CD8-positive, alpha-beta T cell (primary cell): ENCODE measurements at regions of chr6 and their contacts with region 1.

Region 1: DNA sequence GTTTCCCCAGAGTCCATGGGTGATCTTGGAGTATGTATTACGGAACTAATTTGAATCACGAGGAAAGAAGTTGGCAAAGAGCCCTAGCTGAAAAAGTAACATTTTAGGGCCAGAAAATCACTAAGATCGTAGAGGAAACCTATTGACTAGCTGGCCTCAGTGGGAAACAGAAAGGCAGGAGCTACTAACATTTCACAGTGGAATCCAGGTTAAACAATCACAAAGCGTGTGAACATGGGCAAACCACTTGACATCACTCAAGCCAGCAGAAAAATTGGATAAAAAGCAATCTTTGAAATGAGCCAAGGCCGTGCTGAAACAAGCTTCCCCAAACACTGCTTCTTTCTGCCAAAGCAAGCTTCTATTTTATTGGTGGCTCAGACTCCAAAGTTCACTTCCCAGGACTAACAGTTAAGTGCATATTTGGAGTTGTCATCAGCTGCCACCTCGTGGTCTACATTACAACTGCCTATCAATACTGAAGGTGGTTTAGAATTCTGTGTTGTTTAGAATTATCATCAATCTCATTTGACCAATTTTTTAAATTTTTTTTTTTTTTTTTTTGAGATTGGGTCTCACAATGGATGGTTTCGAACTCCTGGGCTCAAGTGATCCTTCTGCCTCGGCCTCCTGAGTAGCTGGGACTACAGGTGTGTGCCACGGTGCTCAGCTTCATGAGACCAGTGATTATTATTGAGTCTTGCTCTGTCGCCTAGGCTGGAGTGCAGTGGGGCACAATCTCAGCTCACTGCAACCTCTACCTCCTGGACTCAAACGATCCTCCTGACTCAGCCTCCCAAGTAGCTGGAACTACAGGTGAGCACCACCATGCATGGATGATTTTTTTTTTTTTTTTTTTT is 10.6 kb downstream of the RPS10 start:
- DNase-seq: peak in 8 of 9 experiments; percentile 6 to 72 (median 42)
- ATAC-seq: peak; percentile 84
- H3K4me3 ChIP-seq: no peak overlapping the region
- H3K4me3 Mint-ChIP-seq: no peak overlapping the region
- H3K27ac ChIP-seq: no peak overlapping the region
- H3K27ac Mint-ChIP-seq: no peak overlapping the region
- H3K4me1 ChIP-seq: no peaks in the 10 kb centered on the region
- H3K4me1 Mint-ChIP-seq: peaks cover 15% of the 10 kb centered on the region
- H3K27me3 ChIP-seq: no peaks in the 10 kb centered on the region
- H3K27me3 Mint-ChIP-seq: no peaks in the 10 kb centered on the region
- CTCF ChIP-seq: peak; percentile 55

Region 2: GRCh38 chr6:33988121-33989015 is 426.9 kb before region 1 on chr6:
- CTCF ChIA-PET with region 1: no interaction called
- POLR2A ChIA-PET with region 1: no interaction called
- intact Hi-C with region 1: no loop called
- DNase-seq: no peak
- ATAC-seq: no peak
- H3K4me3 ChIP-seq: no peak overlapping the region
- H3K4me3 Mint-ChIP-seq: no peak overlapping the region
- H3K27ac ChIP-seq: no peak overlapping the region
- H3K27ac Mint-ChIP-seq: no peak overlapping the region
- H3K4me1 ChIP-seq: no peaks in the 10 kb centered on the region
- H3K4me1 Mint-ChIP-seq: peaks cover under 1% of the 10 kb centered on the region
- H3K27me3 ChIP-seq: peaks cover 0 to 3% of the 10 kb centered on the region in 2 experiments
- H3K27me3 Mint-ChIP-seq: peaks cover 5% of the 10 kb centered on the region
- CTCF ChIP-seq: no peak

Region 3: DNA sequence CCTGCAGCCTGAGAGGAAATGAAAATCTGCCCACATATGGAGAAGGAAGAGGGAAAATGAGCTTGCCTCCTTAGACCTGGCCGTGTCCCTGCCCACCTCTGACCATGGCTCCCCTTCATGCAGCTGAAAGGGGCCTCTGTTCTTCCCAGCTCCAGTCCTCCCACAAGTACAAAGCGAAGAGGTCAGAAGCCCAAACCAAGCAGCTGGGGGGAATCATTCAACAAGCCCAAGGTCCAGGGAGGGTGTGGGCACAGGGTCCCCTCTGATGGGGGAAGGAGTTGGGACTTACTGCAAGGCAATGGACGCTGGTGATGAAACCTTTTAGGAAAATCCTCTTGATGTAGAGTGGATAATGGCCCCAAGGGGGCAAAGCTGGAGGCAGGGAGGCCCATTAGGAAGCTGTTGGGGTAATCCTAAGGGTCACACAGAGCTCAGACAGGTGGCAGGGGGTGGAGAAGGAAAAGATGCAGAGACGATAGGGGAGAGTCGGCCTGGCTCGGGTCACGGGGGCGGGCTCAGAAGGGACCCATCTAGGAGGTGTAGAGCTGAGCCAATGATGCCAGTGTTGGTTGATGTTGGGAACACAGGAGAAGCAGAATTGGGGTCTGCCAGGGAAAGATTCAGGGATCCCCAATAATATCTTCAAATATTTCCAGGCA is 253.2 kb before region 1 on chr6:
- CTCF ChIA-PET with region 1: interaction called, 37 read pairs
- POLR2A ChIA-PET with region 1: interaction called, 7 read pairs
- intact Hi-C with region 1: loop called (anchors 1 kb)
- DNase-seq: no peak
- ATAC-seq: no peak
- H3K4me3 ChIP-seq: no peak overlapping the region
- H3K4me3 Mint-ChIP-seq: no peak overlapping the region
- H3K27ac ChIP-seq: no peak overlapping the region
- H3K27ac Mint-ChIP-seq: no peak overlapping the region
- H3K4me1 ChIP-seq: no peaks in the 10 kb centered on the region
- H3K4me1 Mint-ChIP-seq: no peaks in the 10 kb centered on the region
- H3K27me3 ChIP-seq: no peaks in the 10 kb centered on the region
- H3K27me3 Mint-ChIP-seq: peaks cover 2% of the 10 kb centered on the region
- CTCF ChIP-seq: no peak

Region 4: DNA sequence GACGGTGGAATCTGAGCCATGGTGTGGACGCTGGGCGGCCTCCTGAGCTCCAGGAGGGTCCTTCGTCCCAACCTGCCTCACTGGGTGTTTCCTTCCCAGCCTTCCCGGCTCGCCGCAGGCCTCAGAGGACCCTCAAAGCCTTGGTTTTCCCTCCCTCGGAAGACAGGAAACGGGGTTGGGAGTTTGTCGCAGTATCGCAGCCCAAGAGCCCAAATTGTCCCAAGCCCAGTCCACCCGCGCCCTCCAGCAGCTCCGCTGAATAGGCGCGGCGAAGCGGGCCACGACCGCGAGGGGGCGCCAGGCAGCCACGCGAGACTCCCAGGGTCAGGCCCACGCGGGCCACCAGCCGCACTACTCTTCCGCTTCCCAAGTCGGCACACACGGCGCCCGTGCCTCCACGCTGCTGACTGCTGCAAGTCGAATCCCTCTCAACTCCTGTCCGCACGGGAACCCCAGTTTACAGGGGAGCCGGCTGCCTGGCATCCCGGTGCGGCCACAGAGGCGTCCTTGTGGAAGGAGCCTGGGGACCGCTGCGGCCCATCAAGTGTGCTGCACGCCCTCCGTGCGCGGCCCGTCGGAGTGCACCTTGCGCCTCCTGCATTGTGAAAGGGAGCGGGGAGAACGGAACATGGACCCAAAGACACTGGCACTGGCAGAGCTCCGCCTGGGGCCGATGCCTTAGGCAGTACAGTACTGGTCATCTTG is 219.0 kb before region 1 on chr6:
- CTCF ChIA-PET with region 1: interaction called, 89 read pairs
- POLR2A ChIA-PET with region 1: interaction called, 10 read pairs
- intact Hi-C with region 1: loop called (anchors 1 kb)
- DNase-seq: peak; percentile 81 to 97 (median 90)
- ATAC-seq: peak; percentile 100
- H3K4me3 ChIP-seq: peak overlapping the region; percentile 67 to 89
- H3K4me3 Mint-ChIP-seq: peak overlapping the region; percentile 84
- H3K27ac ChIP-seq: peak overlapping the region in 1 of 2 experiments; percentile 32
- H3K27ac Mint-ChIP-seq: peak overlapping the region; percentile 32
- H3K4me1 ChIP-seq: peaks cover 10% of the 10 kb centered on the region
- H3K4me1 Mint-ChIP-seq: peaks cover 9% of the 10 kb centered on the region
- H3K27me3 ChIP-seq: no peaks in the 10 kb centered on the region
- H3K27me3 Mint-ChIP-seq: no peaks in the 10 kb centered on the region
- CTCF ChIP-seq: peak; percentile 85

Region 5: DNA sequence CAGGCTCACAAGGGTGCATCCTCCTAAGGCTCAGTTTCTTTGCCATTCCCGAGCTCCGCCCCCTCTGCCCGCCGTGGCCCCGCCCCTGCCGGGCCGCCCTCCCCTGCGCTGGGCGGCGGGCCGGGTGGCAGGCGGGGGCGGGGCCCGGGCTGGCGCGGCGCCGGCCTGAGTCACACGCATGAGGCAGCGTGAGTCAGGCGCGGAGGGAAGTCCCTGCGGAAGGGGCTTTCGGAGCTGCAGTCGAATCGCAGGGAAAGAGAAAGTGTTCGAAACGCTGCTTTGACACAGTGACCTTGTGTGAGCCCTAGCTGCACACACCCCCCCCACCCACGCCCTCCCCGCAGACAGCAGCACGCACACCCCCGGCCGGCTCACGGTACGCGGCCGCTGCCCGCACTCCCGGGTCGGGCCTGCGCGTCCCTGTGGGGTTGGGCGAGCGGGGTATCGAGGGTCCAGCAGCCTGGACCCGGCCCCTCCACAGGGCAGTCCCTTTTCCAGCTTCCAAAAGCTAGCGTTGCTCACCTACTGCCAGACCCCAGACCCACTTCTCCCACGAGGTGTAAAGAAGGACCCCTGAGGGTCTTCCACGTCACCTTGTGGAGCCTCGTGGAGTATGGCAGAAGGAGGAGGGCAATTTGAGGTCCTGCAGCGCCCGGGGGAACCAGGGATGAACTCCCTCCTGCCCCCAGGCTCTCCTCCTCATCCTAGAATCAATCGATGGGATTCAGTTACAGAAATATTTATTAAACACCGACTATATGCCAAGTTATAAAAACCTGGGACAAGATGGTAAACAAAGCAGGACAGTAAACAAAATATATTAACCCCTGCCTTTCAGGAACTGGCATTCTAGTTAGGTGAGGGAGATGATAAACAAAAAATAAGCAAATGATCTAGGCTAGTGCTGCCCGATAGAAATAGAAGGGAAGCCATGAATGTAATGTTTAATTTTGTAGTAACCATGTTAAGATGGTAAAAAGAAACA is 191.0 kb before region 1 on chr6:
- CTCF ChIA-PET with region 1: interaction called, 10 read pairs
- POLR2A ChIA-PET with region 1: interaction called, 6 read pairs
- intact Hi-C with region 1: no loop called
- DNase-seq: peak; percentile 88 to 99 (median 94)
- ATAC-seq: peak; percentile 98
- H3K4me3 ChIP-seq: peak overlapping the region; percentile 51 to 86
- H3K4me3 Mint-ChIP-seq: peak overlapping the region; percentile 70
- H3K27ac ChIP-seq: peak overlapping the region; percentile 76 to 87
- H3K27ac Mint-ChIP-seq: peak overlapping the region; percentile 89
- H3K4me1 ChIP-seq: peaks cover 14% of the 10 kb centered on the region
- H3K4me1 Mint-ChIP-seq: peaks cover 20% of the 10 kb centered on the region
- H3K27me3 ChIP-seq: no peaks in the 10 kb centered on the region
- H3K27me3 Mint-ChIP-seq: no peaks in the 10 kb centered on the region
- CTCF ChIP-seq: no peak

Region 6: GRCh38 chr6:34425498-34426410 is 10.5 kb after region 1 on chr6 and contains the start of gene RPS10:
- CTCF ChIA-PET with region 1: interaction called, 16 read pairs
- POLR2A ChIA-PET with region 1: interaction called, 22 read pairs
- intact Hi-C with region 1: no loop called
- DNase-seq: peak; percentile 79 to 95 (median 89)
- ATAC-seq: peak; percentile 98
- H3K4me3 ChIP-seq: peak within 1 kb of the TSS; percentile 78 to 96
- H3K4me3 Mint-ChIP-seq: peak within 1 kb of the TSS; percentile 96
- H3K27ac ChIP-seq: peak within 1 kb of the TSS; percentile 90 to 95
- H3K27ac Mint-ChIP-seq: peak within 1 kb of the TSS; percentile 97
- H3K4me1 ChIP-seq: peaks cover 23% of the 10 kb centered on the region
- H3K4me1 Mint-ChIP-seq: peaks cover 36% of the 10 kb centered on the region
- H3K27me3 ChIP-seq: no peaks in the 10 kb centered on the region
- H3K27me3 Mint-ChIP-seq: no peaks in the 10 kb centered on the region
- CTCF ChIP-seq: no peak
- total RNA-seq, gene RPS10: 2,721 to 2,770 TPM

Region 7: DNA sequence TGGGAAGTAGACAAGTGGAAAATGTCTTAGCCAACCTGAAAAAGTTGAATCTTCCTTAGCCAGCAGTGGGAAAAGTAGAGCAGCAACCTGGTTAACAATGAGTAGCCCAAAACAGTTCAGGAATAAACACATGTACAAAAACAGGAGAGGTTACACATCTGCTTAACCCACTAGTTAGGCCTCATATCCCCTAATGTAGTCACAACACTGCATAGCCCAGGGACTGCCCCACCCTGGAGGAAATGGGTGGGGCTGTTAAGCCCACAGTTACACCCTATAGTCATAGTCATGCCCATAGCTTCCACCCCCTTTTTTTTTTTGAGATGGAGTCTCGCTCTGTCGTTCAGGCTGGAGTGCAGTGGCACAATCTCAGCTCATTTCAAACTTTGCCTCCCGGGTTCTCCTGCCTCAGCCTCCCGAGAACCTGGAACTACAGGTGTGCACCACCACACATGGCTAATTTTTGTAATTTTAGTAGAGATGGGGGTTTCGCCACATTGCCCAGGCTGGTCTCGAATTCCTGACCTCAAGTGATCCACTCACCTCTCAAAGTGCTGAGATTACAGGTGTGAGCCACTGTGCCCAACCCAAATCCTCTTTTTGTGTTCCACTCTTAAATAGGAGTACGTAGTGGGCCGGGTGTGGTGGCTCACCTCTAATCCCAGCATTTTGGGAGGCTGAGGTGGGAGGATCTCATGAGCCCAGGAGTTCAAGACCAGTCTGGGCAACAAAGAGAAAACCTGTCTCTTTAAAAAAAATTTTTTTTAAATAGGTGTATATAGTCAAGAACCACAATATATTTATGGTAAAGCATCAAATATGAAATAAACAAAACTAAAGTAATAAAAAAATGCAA is 256.8 kb after region 1 on chr6:
- CTCF ChIA-PET with region 1: no interaction called
- POLR2A ChIA-PET with region 1: no interaction called
- intact Hi-C with region 1: no loop called
- DNase-seq: peak; percentile 52 to 94 (median 75)
- ATAC-seq: peak; percentile 98
- H3K4me3 ChIP-seq: peak overlapping the region in 1 of 2 experiments; percentile 21
- H3K4me3 Mint-ChIP-seq: peak overlapping the region; percentile 72
- H3K27ac ChIP-seq: peak overlapping the region; percentile 25 to 82
- H3K27ac Mint-ChIP-seq: peak overlapping the region; percentile 95
- H3K4me1 ChIP-seq: peaks cover 50% of the 10 kb centered on the region
- H3K4me1 Mint-ChIP-seq: peaks cover 71% of the 10 kb centered on the region
- H3K27me3 ChIP-seq: no peaks in the 10 kb centered on the region
- H3K27me3 Mint-ChIP-seq: no peaks in the 10 kb centered on the region
- CTCF ChIP-seq: no peak